Gastrocnemius medialis (tissue), 4 donors: ENCODE measurements at regions of chr6 and their contacts with region 1.

Region 1: DNA sequence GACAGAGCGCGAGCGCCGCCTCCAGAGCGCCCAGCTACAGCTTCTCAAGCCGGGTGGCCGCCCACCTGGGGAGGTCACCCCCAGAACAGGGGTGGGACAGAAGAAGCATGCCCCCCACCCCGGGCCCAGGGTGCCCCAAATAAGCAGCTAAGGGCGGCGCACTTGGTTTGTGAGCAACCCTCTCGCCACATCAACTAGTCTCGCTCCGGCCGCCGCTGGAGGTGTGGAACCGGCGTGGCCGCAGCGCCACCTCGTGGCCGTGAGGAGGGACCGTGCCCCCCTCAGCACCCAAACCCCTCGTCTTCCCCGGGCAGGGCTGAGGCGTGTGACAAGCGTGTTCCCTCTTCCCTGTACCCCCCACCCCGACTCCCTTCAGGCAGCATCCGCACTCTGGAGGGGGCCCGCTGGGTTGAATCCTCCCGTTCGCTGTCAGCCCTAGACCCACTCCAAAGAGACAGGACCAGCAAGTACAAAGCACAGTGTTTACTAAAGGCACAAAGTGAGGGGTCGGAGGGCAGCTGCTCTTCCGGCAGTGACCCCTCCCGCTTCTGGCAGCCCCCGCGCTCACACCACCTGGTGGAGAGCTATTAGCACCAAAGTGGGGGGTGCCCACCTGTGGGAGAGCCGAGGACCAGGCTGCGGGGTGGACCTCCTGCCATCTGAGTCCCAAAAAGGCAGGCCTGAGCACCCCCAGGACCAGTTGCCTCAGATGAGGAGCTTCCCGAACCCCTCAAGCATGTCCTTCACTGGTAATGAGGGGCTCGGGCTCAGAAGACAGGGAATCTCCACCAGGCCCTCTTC is 45.4 kb downstream of the MDFI start:
- DNase-seq: peak; percentile 51 to 69
- ATAC-seq: peak; percentile 57 to 67
- H3K4me3 ChIP-seq: peak overlapping the region; percentile 40 to 61 (median 50)
- H3K27ac ChIP-seq: peak overlapping the region; percentile 52 to 67 (median 58)
- H3K4me1 ChIP-seq: peaks cover 13 to 14% of the 10 kb centered on the region in 2 donors
- H3K27me3 ChIP-seq: no peaks in the 10 kb centered on the region
- CTCF ChIP-seq: peak; percentile 78 to 95 (median 90)
- POLR2A ChIP-seq: no peak

Region 2: GRCh38 chr6:41367700-41368099 is 316.0 kb before region 1 on chr6:
- in situ Hi-C with region 1: no loop called
- intact Hi-C with region 1: loop called (anchors 1 kb)
- DNase-seq: no peak
- ATAC-seq: no peak
- H3K4me3 ChIP-seq: no peak overlapping the region
- H3K27ac ChIP-seq: no peak overlapping the region
- H3K4me1 ChIP-seq: peaks cover 10 to 15% of the 10 kb centered on the region in 2 donors
- H3K27me3 ChIP-seq: peaks cover 50 to 54% (median 52%) of the 10 kb centered on the region in 3 donors
- CTCF ChIP-seq: no peak
- POLR2A ChIP-seq: no peak